ENCODE measurements at regions of chr1 and their contacts with region 1.

Region 1: GRCh38 chr1:156860113-156860627 is 495 bp upstream of the NTRK1 start:
- DNase-seq: peak; percentile 24 to 77 (median 50)
- ATAC-seq: peak; percentile 54
- H3K4me3 ChIP-seq: peak overlapping the region; percentile 52
- H3K4me3 Mint-ChIP-seq: peak overlapping the region; percentile 81
- H3K27ac ChIP-seq: no peak overlapping the region
- H3K27ac Mint-ChIP-seq: no peak overlapping the region
- H3K4me1 ChIP-seq: peaks cover 29% of the 10 kb centered on the region
- H3K4me1 Mint-ChIP-seq: peaks cover 30% of the 10 kb centered on the region
- H3K27me3 ChIP-seq: peaks cover 53 to 62% of the 10 kb centered on the region in 2 experiments
- H3K27me3 Mint-ChIP-seq: peaks cover 75% of the 10 kb centered on the region
- CTCF ChIP-seq: peak; percentile 87

Region 2: GRCh38 chr1:156767101-156767878 is 92.9 kb before region 1 on chr1 and contains the start of gene PRCC:
- CTCF ChIA-PET with region 1: interaction called, 11 read pairs
- POLR2A ChIA-PET with region 1: no interaction called
- intact Hi-C with region 1: no loop called
- DNase-seq: peak; percentile 91 to 100 (median 96)
- ATAC-seq: peak; percentile 88
- H3K4me3 ChIP-seq: peak within 1 kb of the TSS; percentile 87
- H3K4me3 Mint-ChIP-seq: no peak within 1 kb of the TSS
- H3K27ac ChIP-seq: peak within 1 kb of the TSS; percentile 96
- H3K27ac Mint-ChIP-seq: no peak within 1 kb of the TSS
- H3K4me1 ChIP-seq: peaks cover 42% of the 10 kb centered on the region
- H3K4me1 Mint-ChIP-seq: peaks cover 37% of the 10 kb centered on the region
- H3K27me3 ChIP-seq: no peaks in the 10 kb centered on the region
- H3K27me3 Mint-ChIP-seq: no peaks in the 10 kb centered on the region
- CTCF ChIP-seq: no peak
- total RNA-seq, gene PRCC: 49.5 to 50.0 TPM

Region 3: GRCh38 chr1:156804572-156805243 is 55.5 kb before region 1 on chr1:
- CTCF ChIA-PET with region 1: interaction called, 87 read pairs
- POLR2A ChIA-PET with region 1: interaction called, 18 read pairs
- intact Hi-C with region 1: no loop called
- DNase-seq: peak in 1 of 14 experiments; percentile 32
- ATAC-seq: no peak
- H3K4me3 ChIP-seq: no peak overlapping the region
- H3K4me3 Mint-ChIP-seq: no peak overlapping the region
- H3K27ac ChIP-seq: peak overlapping the region in 1 of 2 donors; percentile 30
- H3K27ac Mint-ChIP-seq: peak overlapping the region; percentile 65
- H3K4me1 ChIP-seq: peaks cover 65% of the 10 kb centered on the region
- H3K4me1 Mint-ChIP-seq: peaks cover 24% of the 10 kb centered on the region
- H3K27me3 ChIP-seq: no peaks in the 10 kb centered on the region
- H3K27me3 Mint-ChIP-seq: no peaks in the 10 kb centered on the region
- CTCF ChIP-seq: no peak

Region 4: DNA sequence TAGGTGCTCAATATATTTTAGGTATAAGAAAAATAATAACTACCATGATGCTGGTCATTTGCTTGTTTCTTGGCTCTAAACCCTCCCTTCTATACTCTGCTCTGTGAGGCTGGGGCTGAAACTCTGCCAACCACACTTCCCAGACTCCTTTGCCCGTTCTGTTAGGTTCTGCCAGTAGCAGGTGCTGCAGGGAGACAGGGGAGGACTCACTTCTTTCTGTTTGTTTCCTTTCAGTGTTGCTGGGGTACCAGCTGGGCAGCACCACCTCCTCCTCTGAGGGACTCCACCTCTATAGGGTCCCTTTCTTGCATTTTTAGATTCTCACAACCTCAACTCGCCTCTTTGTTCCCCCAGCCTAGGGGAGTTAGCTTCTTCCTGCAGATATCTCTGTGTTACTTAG is 26.6 kb before region 1 on chr1:
- CTCF ChIA-PET with region 1: interaction called, 52 read pairs
- POLR2A ChIA-PET with region 1: interaction called, 20 read pairs
- intact Hi-C with region 1: no loop called
- DNase-seq: peak in 3 of 14 experiments; percentile 32 to 47 (median 43)
- ATAC-seq: peak; percentile 73
- H3K4me3 ChIP-seq: no peak overlapping the region
- H3K4me3 Mint-ChIP-seq: no peak overlapping the region
- H3K27ac ChIP-seq: no peak overlapping the region
- H3K27ac Mint-ChIP-seq: no peak overlapping the region
- H3K4me1 ChIP-seq: peaks cover 21% of the 10 kb centered on the region
- H3K4me1 Mint-ChIP-seq: peaks cover 14% of the 10 kb centered on the region
- H3K27me3 ChIP-seq: no peaks in the 10 kb centered on the region
- H3K27me3 Mint-ChIP-seq: peaks cover 22% of the 10 kb centered on the region
- CTCF ChIP-seq: no peak

Region 5: GRCh38 chr1:156848461-156849150 is 11.6 kb before region 1 on chr1:
- CTCF ChIA-PET with region 1: interaction called, 11 read pairs
- POLR2A ChIA-PET with region 1: interaction called, 20 read pairs
- intact Hi-C with region 1: no loop called
- DNase-seq: peak; percentile 56 to 92 (median 72)
- ATAC-seq: peak; percentile 86
- H3K4me3 ChIP-seq: peak overlapping the region; percentile 37
- H3K4me3 Mint-ChIP-seq: peak overlapping the region; percentile 70
- H3K27ac ChIP-seq: no peak overlapping the region
- H3K27ac Mint-ChIP-seq: peak overlapping the region; percentile 37
- H3K4me1 ChIP-seq: peaks cover 30% of the 10 kb centered on the region
- H3K4me1 Mint-ChIP-seq: peaks cover 46% of the 10 kb centered on the region
- H3K27me3 ChIP-seq: peaks cover 16% of the 10 kb centered on the region in 2 experiments
- H3K27me3 Mint-ChIP-seq: peaks cover 43% of the 10 kb centered on the region
- CTCF ChIP-seq: no peak

Region 6: GRCh38 chr1:157099630-157100009 is 239.4 kb after region 1 on chr1 and contains the start of gene ETV3L:
- CTCF ChIA-PET with region 1: no interaction called
- POLR2A ChIA-PET with region 1: no interaction called
- intact Hi-C with region 1: no loop called
- DNase-seq: peak in 2 of 14 experiments; percentile 53 to 59
- ATAC-seq: no peak
- H3K4me3 ChIP-seq: no peak within 1 kb of the TSS
- H3K4me3 Mint-ChIP-seq: no peak within 1 kb of the TSS
- H3K27ac ChIP-seq: no peak within 1 kb of the TSS
- H3K27ac Mint-ChIP-seq: no peak within 1 kb of the TSS
- H3K4me1 ChIP-seq: peaks cover 4% of the 10 kb centered on the region
- H3K4me1 Mint-ChIP-seq: no peaks in the 10 kb centered on the region
- H3K27me3 ChIP-seq: no peaks in the 10 kb centered on the region
- H3K27me3 Mint-ChIP-seq: no peaks in the 10 kb centered on the region
- CTCF ChIP-seq: no peak
- total RNA-seq, gene ETV3L: not detected

Measured in CD4-positive, alpha-beta T cell (primary cell).